Esophagus muscularis mucosa (tissue), 4 donors: ENCODE measurements at regions of chr4 and their contacts with region 1.

Region 1: GRCh38 chr4:9762823-9763475 is 18.5 kb upstream of the DRD5 start:
- DNase-seq: no peak
- H3K4me3 ChIP-seq: no peak overlapping the region
- H3K27ac ChIP-seq: no peak overlapping the region
- H3K4me1 ChIP-seq: no peaks in the 10 kb centered on the region
- H3K27me3 ChIP-seq: peaks cover 0 to 27% (median 0%) of the 10 kb centered on the region in 4 donors
- CTCF ChIP-seq: peak; percentile 56 to 66 (median 61)
- EP300 ChIP-seq: no peak
- POLR2A ChIP-seq: no peak

Region 2: GRCh38 chr4:10006231-10006600 is 243.3 kb after region 1 on chr4:
- intact Hi-C with region 1: no loop called
- DNase-seq: no peak
- H3K4me3 ChIP-seq: no peak overlapping the region
- H3K27ac ChIP-seq: peak overlapping the region; percentile 43 to 70 (median 56)
- H3K4me1 ChIP-seq: peaks cover 26 to 33% (median 30%) of the 10 kb centered on the region in 4 donors
- H3K27me3 ChIP-seq: no peaks in the 10 kb centered on the region
- CTCF ChIP-seq: no peak
- EP300 ChIP-seq: no peak
- POLR2A ChIP-seq: no peak

Region 3: GRCh38 chr4:10069075-10069642 is 306.2 kb after region 1 on chr4:
- intact Hi-C with region 1: loop called (anchors 5 kb)
- DNase-seq: no peak
- H3K4me3 ChIP-seq: no peak overlapping the region
- H3K27ac ChIP-seq: no peak overlapping the region
- H3K4me1 ChIP-seq: peaks cover 0 to 3% (median 2%) of the 10 kb centered on the region in 4 donors
- H3K27me3 ChIP-seq: no peaks in the 10 kb centered on the region
- CTCF ChIP-seq: no peak
- EP300 ChIP-seq: no peak
- POLR2A ChIP-seq: no peak